Activated naive CD8-positive, alpha-beta T cell treated with anti-CD3 and anti-CD28 coated beads, Interleukin-2, amount 10 ng/mL, durations not matched to agents 7 days and 5 days (primary cell): ENCODE measurements at regions of chr17 and their contacts with region 1.

Region 1: GRCh38 chr17:59837308-59838051 is 55.3 kb downstream of the TUBD1 start:
- DNase-seq: no peak
- ATAC-seq: peak; percentile 93
- H3K4me3 Mint-ChIP-seq: peak overlapping the region; percentile 90
- H3K27ac Mint-ChIP-seq: peak overlapping the region; percentile 94
- H3K4me1 Mint-ChIP-seq: peaks cover 33% of the 10 kb centered on the region
- H3K27me3 Mint-ChIP-seq: no peaks in the 10 kb centered on the region

Region 2: GRCh38 chr17:59800530-59800942 is 36.9 kb before region 1 on chr17:
- POLR2A ChIA-PET with region 1: no interaction called
- DNase-seq: no peak
- ATAC-seq: no peak
- H3K4me3 Mint-ChIP-seq: no peak overlapping the region
- H3K27ac Mint-ChIP-seq: no peak overlapping the region
- H3K4me1 Mint-ChIP-seq: peaks cover 21% of the 10 kb centered on the region
- H3K27me3 Mint-ChIP-seq: no peaks in the 10 kb centered on the region

Region 3: DNA sequence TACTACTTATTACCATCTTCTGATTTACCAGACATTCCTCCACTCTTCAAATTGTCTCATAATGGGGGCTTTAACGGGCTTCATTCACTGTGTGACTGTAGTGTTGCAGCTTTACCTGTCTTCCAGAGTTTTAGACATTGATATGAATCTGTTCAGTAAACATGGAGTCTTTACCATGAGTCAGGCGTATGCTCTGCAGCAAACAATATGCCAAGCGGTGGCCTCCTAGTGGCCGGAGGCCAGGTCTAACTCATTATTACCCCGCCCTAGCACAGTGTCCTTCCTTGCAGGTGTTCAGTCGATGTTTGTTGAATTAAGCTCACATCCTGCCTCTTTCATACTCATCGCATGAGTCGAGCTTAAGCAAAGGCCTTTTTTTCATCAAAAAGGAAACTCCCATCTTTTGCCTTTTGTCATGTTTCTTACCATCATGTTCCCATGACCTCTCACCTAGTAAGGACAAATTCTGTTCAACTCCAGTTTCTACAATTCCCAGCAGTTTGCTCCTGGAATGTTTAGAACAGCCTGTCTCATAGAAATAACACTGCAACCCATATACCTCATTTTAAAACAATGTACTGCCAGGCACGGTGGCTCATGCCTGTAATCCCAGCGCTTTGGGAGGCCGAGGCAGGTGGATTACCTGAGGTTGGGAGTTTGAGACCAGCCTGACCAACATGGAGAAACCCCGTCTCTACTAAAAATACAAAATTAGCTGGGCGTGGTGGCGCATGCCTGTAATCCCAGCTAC is 15.9 kb after region 1 on chr17:
- POLR2A ChIA-PET with region 1: interaction called, 10 read pairs
- DNase-seq: no peak
- ATAC-seq: peak; percentile 78
- H3K4me3 Mint-ChIP-seq: no peak overlapping the region
- H3K27ac Mint-ChIP-seq: peak overlapping the region; percentile 64
- H3K4me1 Mint-ChIP-seq: peaks cover 34% of the 10 kb centered on the region
- H3K27me3 Mint-ChIP-seq: no peaks in the 10 kb centered on the region

Region 4: DNA sequence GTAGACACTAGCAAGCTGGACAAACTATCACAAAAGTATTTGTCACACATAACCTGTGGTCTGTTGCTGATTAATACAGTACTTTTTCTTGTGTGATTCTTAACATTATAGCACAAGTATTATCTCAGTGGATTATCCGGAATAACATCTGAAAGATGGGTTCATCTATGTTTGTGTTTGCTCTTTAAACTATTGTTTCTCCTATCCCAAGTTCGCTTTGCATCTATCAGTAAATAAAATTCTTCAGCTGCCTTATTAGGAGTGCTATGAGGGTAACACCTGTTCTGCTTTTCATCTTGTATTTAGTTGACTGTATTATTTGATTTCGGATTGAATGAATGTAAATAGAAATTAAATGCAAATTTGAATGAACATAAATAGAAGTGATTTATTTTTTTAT is 112.6 kb after region 1 on chr17:
- POLR2A ChIA-PET with region 1: no interaction called
- DNase-seq: no peak
- ATAC-seq: no peak
- H3K4me3 Mint-ChIP-seq: no peak overlapping the region
- H3K27ac Mint-ChIP-seq: no peak overlapping the region
- H3K4me1 Mint-ChIP-seq: peaks cover 11% of the 10 kb centered on the region
- H3K27me3 Mint-ChIP-seq: no peaks in the 10 kb centered on the region